Activated CD4-positive, alpha-beta memory T cell treated with anti-CD3 and anti-CD28 coated beads, Interleukin-2, amount 10 ng/mL, durations not matched to agents 7 days and 5 days (primary cell): ENCODE measurements at regions of chr1 and their contacts with region 1.

Region 1: GRCh38 chr1:5370311-5370710 is 621.9 kb downstream of the NPHP4 start:
- DNase-seq: peak; percentile 68
- H3K4me3 Mint-ChIP-seq: no peak overlapping the region
- H3K27ac Mint-ChIP-seq: peak overlapping the region; percentile 77
- H3K4me1 Mint-ChIP-seq: peaks cover 27% of the 10 kb centered on the region
- H3K27me3 Mint-ChIP-seq: peaks cover 4% of the 10 kb centered on the region

Region 2: GRCh38 chr1:5286244-5286643 is 84.1 kb before region 1 on chr1:
- CTCF ChIA-PET with region 1: interaction called, 13 read pairs
- POLR2A ChIA-PET with region 1: interaction called, 3 read pairs
- DNase-seq: peak; percentile 65
- H3K4me3 Mint-ChIP-seq: no peak overlapping the region
- H3K27ac Mint-ChIP-seq: no peak overlapping the region
- H3K4me1 Mint-ChIP-seq: no peaks in the 10 kb centered on the region
- H3K27me3 Mint-ChIP-seq: peaks cover 3% of the 10 kb centered on the region

Region 3: GRCh38 chr1:5389101-5389885 is 19.0 kb after region 1 on chr1:
- CTCF ChIA-PET with region 1: interaction called, 26 read pairs
- POLR2A ChIA-PET with region 1: interaction called, 37 read pairs
- DNase-seq: peak; percentile 31
- H3K4me3 Mint-ChIP-seq: peak overlapping the region; percentile 57
- H3K27ac Mint-ChIP-seq: no peak overlapping the region
- H3K4me1 Mint-ChIP-seq: peaks cover 2% of the 10 kb centered on the region
- H3K27me3 Mint-ChIP-seq: peaks cover 9% of the 10 kb centered on the region